ENCODE measurements at regions of chr17 and their contacts with region 1.

Region 1: DNA sequence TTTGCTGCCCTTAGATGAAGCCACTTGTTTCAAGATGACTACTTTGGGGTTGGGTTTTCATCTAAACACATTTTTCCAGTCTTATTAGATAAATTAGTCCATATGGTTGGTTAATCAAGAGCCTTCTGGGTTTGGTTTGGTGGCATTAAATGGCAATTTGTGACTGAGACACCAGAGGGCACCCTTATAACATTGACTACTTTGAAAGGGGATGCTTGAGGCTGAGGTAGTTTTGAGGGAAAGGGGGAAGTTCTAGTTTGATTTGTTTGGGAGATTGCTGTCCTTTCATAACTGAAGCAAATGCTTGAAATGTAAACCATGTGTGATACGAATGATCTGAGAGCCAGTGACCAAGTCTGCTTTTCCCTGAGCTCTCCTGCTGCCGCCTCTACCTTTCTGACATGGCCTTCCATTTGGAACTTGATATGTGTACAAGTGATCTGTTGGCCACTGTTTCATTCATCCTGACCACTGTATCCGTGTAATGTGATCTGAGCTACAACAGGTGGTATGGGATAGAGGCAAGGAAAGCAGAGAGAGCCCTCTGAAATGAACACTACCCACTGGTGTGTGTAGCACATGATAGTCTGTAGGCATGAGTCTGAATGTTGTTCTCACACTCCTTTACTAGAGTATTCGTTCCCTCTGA is 5.8 kb upstream of the RARA start:
- DNase-seq: peak; percentile 46
- H3K4me3 Mint-ChIP-seq: no peak overlapping the region
- H3K27ac Mint-ChIP-seq: peak overlapping the region; percentile 36
- H3K4me1 Mint-ChIP-seq: peaks cover 15% of the 10 kb centered on the region
- H3K27me3 Mint-ChIP-seq: no peaks in the 10 kb centered on the region

Region 2: GRCh38 chr17:40333781-40334448 is 30.8 kb after region 1 on chr17:
- CTCF ChIA-PET with region 1: interaction called, 10 read pairs
- POLR2A ChIA-PET with region 1: no interaction called
- intact Hi-C with region 1: no loop called
- DNase-seq: no peak
- H3K4me3 Mint-ChIP-seq: no peak overlapping the region
- H3K27ac Mint-ChIP-seq: peak overlapping the region; percentile 49
- H3K4me1 Mint-ChIP-seq: peaks cover 71% of the 10 kb centered on the region
- H3K27me3 Mint-ChIP-seq: no peaks in the 10 kb centered on the region

Region 3: DNA sequence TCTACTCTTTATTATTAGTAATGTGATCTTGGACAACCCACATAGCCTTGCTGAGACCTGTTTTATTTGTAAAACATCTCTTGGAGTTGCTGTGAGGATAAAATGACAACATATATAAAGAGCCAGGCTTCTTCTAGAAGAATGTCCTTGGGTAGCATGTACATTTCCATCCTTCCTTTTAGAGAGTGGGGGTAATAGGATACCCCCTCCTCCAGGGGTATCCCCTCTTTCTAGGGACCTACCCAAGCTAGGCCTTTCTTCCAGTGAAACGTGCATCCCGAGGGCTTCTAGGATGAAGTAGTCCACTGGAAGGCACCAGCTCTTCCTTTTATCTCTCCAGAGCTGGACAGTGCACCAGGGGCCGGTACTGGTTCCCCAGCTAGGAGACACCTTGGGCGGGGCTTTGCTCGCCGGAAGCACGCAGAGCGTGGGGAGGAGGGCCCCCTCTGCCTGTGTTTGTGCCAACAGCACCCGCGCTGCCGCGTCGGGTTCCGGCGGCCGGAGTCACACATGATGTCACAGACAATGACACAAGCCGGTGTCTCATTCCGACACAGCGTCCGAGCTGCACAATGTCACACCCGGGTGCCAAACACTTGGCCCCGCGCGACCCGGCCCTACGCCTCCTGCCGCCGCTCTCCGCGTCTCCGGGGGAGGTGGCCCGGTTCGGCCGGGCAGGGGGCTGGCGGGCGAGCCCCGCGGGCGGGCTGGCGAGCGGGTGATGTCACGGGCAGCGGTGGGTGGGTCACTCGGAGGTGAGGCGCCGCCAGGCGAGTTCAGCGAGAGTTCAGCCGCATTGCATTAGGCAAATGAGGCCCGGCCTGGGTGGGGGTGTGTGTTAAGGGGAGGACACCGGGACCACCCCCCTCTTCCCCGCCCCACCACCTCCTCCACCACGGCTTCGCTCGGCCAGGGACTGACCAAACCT is 38.0 kb after region 1 on chr17:
- CTCF ChIA-PET with region 1: interaction called, 16 read pairs
- POLR2A ChIA-PET with region 1: interaction called, 3 read pairs
- intact Hi-C with region 1: no loop called
- DNase-seq: peak; percentile 94
- H3K4me3 Mint-ChIP-seq: peak overlapping the region; percentile 66
- H3K27ac Mint-ChIP-seq: peak overlapping the region; percentile 81
- H3K4me1 Mint-ChIP-seq: peaks cover 75% of the 10 kb centered on the region
- H3K27me3 Mint-ChIP-seq: no peaks in the 10 kb centered on the region

Region 4: GRCh38 chr17:41456208-41456607 is 1153.1 kb after region 1 on chr17:
- CTCF ChIA-PET with region 1: no interaction called
- POLR2A ChIA-PET with region 1: no interaction called
- intact Hi-C with region 1: no loop called
- DNase-seq: no peak
- H3K4me3 Mint-ChIP-seq: no peak overlapping the region
- H3K27ac Mint-ChIP-seq: no peak overlapping the region
- H3K4me1 Mint-ChIP-seq: no peaks in the 10 kb centered on the region
- H3K27me3 Mint-ChIP-seq: no peaks in the 10 kb centered on the region

Measured in activated CD4-positive, alpha-beta memory T cell treated with anti-CD3 and anti-CD28 coated beads for 36 hours (primary cell).